ENCODE measurements at regions of chr7 and their contacts with region 1.

Region 1: DNA sequence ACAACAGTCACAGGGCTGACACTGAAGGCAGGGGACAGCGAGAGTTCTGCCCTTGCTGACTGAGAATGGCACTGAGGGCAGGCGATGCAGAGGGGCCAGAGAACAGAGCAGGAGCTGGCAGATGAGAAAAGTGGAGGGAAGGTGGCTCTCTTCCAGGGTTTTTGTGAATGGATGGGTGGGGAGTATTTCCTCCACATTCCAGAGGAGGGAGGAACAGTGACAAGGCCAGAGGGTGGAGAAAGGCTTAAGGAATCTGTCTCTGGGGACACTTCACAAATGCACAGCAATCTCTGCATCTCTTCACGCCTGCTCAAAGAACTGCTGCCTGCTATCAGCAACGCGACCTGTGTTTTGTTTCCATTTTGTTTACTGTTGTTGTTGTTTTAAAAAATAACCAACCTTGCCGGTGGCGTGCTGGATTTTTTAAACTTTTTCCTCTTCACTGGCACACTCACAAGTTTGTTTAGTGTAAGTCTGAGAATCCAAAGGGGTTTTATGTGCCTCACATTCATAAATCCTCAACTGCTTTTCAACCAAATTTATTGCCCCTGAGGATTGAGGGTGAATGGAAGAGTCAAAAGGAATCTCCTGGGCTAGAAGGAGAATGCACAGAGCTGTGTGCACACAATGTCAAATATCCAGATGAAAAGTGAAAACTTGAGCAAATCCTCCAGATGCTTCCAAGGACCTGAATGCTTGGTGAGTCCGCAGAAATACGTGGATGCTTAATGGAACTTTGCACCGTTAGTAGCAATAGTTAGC is 129.3 kb downstream of the GLI3 start:
- DNase-seq: peak in 1 of 2 donors; percentile 25
- ATAC-seq: peak; percentile 35 to 54
- H3K4me3 ChIP-seq: no peak overlapping the region
- H3K27ac ChIP-seq: no peak overlapping the region
- H3K4me1 ChIP-seq: peaks cover 12% of the 10 kb centered on the region in 2 donors
- H3K27me3 ChIP-seq: no peaks in the 10 kb centered on the region
- CTCF ChIP-seq: no peak
- POLR2A ChIP-seq: no peak

Region 2: DNA sequence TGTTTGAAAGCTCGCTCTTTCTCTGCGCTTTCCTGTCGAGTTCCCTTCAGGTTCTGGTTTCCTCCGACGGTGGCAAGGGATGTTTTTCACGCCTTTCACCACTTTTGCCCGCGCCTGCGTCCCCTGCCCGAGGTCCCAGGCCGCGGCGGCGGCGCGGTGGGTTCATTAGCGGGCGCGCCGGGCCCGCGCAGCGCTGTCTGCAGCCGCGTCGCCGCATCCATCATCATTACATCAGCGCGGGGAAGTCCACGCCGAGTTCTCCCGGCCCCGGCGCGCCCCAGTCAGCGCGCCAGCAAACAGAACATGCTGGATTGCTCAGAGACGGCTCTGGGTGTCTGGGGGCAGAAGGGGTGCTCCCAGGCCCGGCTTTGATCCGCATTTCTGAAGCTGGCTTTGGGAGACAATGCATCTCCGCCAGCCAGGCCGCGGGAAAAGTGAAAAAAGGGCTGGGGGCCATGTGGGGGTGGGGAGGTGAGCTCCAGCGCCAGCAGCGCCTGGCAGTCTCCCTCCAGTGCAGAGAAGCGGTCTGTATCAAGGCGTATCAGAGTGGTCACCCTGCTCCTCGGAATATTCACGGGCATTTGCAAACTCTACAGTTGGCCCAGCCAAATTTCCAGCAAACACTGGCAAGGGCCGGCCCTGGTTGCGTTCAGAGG is 120.4 kb after region 1 on chr7:
- in situ Hi-C with region 1: no loop called
- intact Hi-C with region 1: loop called (anchors 10 kb)
- DNase-seq: no peak
- ATAC-seq: peak; percentile 45 to 53
- H3K4me3 ChIP-seq: peak overlapping the region; percentile 17 to 50 (median 36)
- H3K27ac ChIP-seq: no peak overlapping the region
- H3K4me1 ChIP-seq: peaks cover 7 to 10% of the 10 kb centered on the region in 2 donors
- H3K27me3 ChIP-seq: peaks cover 15 to 27% (median 20%) of the 10 kb centered on the region in 3 donors
- CTCF ChIP-seq: no peak
- POLR2A ChIP-seq: no peak